ENCODE measurements at regions of chr19 and their contacts with region 1.

Region 1: GRCh38 chr19:46487802-46488445 is 7.7 kb downstream of the PNMA8B start:
- DNase-seq: peak; percentile 94

Region 2: DNA sequence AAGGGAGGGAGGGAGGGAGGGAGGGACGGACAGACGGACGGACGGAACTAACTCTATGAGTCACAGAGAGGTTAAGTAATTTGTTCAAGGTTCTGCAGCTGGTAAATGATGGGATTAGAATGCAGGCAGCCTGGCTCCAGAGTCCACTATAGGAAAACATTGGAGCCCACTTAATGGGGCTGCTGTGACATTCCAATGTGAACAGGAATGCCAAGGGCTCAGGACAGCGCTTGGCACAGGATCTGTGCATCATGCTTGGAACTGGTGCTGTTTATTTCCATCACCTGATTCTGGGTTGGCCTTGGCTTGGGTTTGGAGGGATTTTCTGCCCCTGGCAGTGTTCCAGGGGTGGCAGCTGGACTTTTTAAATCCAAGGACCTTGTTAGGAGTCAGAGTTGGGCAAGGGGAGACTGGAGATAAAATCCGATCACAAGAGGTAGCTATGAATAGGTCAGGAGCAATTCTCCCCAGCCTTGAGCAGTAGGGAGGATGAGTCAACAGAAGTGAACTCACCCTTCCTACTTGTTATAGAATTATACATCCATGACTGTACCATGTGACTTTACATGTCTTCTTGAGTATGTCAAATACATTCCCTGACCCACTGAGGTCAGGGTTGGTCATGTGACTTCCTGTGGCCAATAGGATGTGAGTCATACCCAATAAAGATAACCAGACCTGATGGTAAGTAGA is 198.9 kb before region 1 on chr19:
- intact Hi-C with region 1: loop called in 1 of 2 experiments (anchors 10 kb)
- DNase-seq: no peak

Region 3: GRCh38 chr19:46392243-46392801 is 95.6 kb before region 1 on chr19:
- intact Hi-C with region 1: loop called (anchors 2 to 5 kb)
- DNase-seq: peak; percentile 80

Region 4: GRCh38 chr19:46404055-46404752 is 83.7 kb before region 1 on chr19:
- intact Hi-C with region 1: loop called in 1 of 2 experiments (anchors 2 kb)
- DNase-seq: no peak

Region 5: DNA sequence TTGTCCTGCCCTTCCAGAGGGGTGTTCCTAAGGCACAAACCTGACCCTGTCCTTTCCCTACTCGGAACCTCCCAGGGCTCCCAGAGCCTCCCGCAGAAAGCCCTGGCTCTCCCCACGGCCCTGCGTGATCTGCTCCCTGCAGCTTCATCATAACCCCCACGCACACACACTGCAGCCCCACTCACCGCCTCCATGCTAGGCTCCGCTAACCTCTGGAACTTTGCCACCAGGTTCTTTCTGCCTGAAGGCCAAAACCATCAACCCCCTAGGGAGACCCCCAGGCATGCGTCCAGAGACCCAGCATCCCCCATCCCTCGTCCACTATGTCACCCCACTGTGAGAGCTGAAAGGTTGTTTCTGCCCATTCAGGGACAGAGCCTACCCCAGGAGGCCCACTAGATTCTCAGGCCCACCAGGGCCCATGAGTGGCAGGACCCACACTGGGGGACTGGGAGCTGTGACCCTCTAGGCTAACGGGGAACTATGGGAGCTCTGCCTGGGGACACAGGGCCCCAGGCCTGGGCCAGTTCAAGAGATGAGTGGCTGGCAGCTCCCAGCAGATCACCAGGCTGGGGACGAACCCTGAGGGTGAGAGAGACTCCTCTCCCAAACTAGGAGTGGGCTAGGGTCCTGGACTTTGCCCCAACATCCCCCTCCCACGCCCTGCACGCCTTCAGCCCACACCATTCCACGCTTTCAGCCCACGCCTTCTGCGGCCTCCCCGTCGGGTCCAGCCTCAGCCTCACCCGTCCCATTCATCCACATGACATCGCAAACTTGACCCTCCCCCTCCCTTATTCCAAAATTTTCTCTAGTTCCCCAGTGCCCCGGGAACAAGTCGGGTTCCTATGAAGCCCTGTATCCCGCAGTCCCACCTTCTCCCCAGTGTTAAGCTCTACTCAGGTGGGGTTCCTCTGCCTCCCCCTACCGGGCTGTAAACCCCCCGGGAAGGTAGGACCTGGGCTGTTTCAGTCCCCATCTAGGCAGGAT is 41.0 kb after region 1 on chr19:
- intact Hi-C with region 1: no loop called
- DNase-seq: no peak

Region 6: GRCh38 chr19:46555628-46556280 is 67.8 kb after region 1 on chr19:
- intact Hi-C with region 1: no loop called
- DNase-seq: no peak

Measured in posterior vena cava (tissue), 2 donors.